Astrocyte of the cerebellum (primary cell): ENCODE measurements at regions of chr6 and their contacts with region 1.

Region 1: DNA sequence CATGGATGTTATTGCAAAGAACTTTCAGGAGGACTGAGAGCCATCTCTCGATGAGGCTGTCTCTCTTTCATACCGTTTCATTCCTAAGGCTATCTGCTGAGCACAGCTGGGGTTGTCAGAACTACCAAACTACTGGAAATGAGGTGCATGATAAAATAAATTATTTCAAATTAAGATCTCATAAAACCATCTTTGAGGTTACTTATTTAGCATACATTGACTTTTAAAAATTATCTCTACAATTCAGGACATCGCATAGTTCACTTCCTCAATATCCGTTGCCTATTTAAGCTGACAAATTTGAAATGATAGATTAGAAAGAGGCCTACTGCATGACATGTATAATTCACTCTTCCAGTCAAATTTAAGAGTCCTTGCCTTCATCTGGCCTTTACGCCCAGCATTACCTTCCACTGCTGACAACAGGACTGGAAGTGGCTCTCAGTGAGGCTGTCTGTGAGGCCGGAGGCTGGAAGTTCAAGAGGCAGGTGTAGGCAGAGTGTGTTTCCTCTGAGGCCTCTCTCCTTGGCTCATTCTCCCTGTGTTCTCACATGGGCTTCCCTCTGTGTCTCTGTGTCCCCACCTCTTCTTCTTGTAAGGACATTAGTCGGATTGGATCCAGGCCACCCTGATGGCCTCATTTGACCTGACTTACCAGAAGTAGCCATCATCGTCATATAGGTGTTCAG is 12.8 kb upstream of the DUSP22 start:
- DNase-seq: no peak
- H3K4me3 ChIP-seq: no peak overlapping the region
- CTCF ChIP-seq: no peak

Region 2: DNA sequence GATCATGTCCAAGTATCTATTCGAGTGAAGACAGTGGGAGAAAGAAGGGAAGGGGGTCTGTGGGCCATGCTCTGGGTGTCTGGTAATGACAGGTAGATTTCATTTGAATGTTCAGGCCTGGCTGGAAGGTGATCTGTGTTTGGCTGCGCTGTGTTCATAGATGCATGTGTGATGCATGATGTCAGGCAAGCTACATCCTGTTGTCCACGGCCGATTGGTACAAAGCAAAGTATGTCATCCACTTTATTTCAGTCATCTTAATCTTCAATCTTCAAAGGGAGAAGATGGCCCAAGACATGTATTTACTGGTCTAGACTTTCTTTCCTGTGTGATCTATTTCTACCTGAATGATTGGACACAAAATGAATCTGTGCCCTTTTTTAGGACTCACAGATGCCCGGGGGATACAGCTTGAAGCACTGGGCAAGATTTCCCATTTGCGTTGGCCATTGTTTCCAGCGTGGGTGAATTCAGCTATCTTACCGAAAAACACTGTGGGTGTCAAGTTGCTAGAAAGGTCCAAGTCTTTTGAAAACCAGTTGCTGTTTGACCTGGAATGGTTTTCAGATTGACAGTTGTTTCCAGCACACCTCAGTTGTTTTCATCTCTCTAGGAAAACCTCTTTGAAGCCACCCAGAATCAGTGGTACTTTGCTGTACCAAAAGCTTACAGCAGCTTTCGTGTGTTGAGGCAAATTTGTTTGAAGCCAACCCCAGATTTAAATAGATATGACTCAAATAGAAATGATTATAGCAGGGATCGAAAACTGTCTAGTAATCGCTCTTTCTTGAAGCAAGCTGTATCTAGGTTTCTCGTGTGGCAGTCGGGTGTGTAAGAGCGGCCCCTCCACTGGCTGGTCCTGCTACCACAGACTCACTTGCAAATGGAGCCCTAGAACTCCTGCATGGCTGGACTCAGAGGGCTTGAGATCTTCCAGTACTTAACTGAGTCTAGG is 40.0 kb after region 1 on chr6:
- in situ Hi-C with region 1: loop called (anchors 5 kb)
- DNase-seq: no peak
- H3K4me3 ChIP-seq: no peak overlapping the region
- CTCF ChIP-seq: no peak